ENCODE measurements at regions of chr16 and their contacts with region 1.

Region 1: GRCh38 chr16:83826146-83826913 is 18.6 kb downstream of the HSBP1 start:
- DNase-seq: peak; percentile 70 to 89 (median 82)
- ATAC-seq: peak; percentile 85 to 94 (median 92)
- H3K4me3 ChIP-seq: no peak overlapping the region
- H3K27ac ChIP-seq: no peak overlapping the region
- H3K4me1 ChIP-seq: peaks cover 0 to 5% (median 0%) of the 10 kb centered on the region in 12 donors
- H3K27me3 ChIP-seq: no peaks in the 10 kb centered on the region
- CTCF ChIP-seq: peak; percentile 92 to 96 (median 95)
- POLR2A ChIP-seq: no peak

Region 2: DNA sequence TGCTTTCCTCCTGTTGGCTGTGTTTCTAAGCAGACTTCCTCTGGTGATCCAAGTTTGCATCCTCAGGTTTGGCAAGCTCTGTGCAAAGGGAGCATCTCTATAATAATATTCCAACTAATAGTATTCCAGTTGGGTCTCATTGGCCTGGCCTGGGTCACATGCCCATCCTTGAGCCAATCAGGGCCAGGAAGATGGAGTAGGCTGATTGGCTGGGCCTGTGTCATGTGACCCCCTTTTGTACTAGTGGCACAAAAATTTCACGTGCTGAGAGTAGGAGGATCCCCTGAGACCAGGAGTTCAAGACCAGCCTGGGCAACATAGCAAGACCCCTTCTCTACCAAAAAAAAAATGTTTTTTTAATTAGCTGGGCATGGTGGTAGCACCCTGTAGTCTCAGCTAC is 37.4 kb after region 1 on chr16:
- intact Hi-C with region 1: loop called in 1 of 10 experiments (anchors 5 kb)
- DNase-seq: no peak
- ATAC-seq: no peak
- H3K4me3 ChIP-seq: no peak overlapping the region
- H3K27ac ChIP-seq: no peak overlapping the region
- H3K4me1 ChIP-seq: no peaks in the 10 kb centered on the region
- H3K27me3 ChIP-seq: peaks cover 0 to 2% (median 0%) of the 10 kb centered on the region in 9 donors
- CTCF ChIP-seq: no peak
- POLR2A ChIP-seq: no peak

Region 3: GRCh38 chr16:83887081-83887480 is 60.8 kb after region 1 on chr16:
- intact Hi-C with region 1: loop called in 1 of 10 experiments (anchors 5 kb)
- DNase-seq: no peak
- ATAC-seq: no peak
- H3K4me3 ChIP-seq: no peak overlapping the region
- H3K27ac ChIP-seq: no peak overlapping the region
- H3K4me1 ChIP-seq: peaks cover 0 to 5% (median 2%) of the 10 kb centered on the region in 12 donors
- H3K27me3 ChIP-seq: peaks cover 0 to 2% (median 0%) of the 10 kb centered on the region in 9 donors
- CTCF ChIP-seq: no peak
- POLR2A ChIP-seq: no peak

Region 4: GRCh38 chr16:83898463-83899271 is 72.3 kb after region 1 on chr16 and contains the start of gene MLYCD:
- intact Hi-C with region 1: no loop called
- DNase-seq: peak; percentile 89 to 93 (median 92)
- ATAC-seq: peak; percentile 86 to 91 (median 90)
- H3K4me3 ChIP-seq: peak within 1 kb of the TSS; percentile 65 to 98 (median 90)
- H3K27ac ChIP-seq: peak within 1 kb of the TSS; percentile 88 to 99 (median 98)
- H3K4me1 ChIP-seq: peaks cover 0 to 48% (median 30%) of the 10 kb centered on the region in 12 donors
- H3K27me3 ChIP-seq: no peaks in the 10 kb centered on the region
- CTCF ChIP-seq: peak in 1 of 12 donors; percentile 6
- POLR2A ChIP-seq: peak; percentile 31 to 51
- total RNA-seq, gene MLYCD: 22.5 to 65.3 (median 40.2) TPM

Region 5: DNA sequence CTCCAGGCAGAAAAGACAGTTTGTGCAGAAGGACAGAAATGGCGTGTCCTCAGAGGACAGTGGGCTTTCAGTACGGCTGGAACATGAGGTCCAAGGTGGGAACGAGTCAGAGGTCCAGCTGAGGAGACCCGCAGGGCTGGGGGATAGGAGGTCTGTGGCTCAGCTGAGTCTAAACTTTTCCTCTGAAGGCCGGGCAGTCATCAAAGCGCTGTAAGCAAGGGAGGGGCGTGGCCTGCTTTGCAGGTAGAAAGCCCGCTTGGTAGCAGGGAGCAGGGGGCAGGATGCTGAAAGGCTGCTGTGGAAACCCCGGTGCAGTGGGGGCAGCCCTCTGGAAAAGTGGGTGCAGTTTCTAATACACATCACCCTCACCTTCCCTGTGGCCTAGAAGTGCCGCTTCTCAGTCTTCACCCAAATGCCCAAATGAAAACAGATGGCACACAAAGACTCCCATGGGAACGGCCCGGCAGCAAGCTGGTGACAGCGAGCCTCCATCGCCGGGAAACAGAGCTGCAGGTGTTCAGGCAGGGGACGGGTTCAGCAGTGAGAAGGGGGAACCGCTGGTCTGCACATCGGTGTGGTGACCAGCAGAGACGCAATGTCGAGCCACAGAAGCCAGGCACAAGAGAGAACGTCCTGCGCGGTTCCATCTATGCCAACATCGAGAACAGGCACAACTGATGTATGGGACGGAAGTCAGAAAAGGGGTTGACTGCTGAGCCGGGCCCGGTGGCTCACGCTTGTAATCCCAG is 114.5 kb after region 1 on chr16:
- intact Hi-C with region 1: loop called in 1 of 10 experiments (anchors 5 kb)
- DNase-seq: no peak
- ATAC-seq: no peak
- H3K4me3 ChIP-seq: no peak overlapping the region
- H3K27ac ChIP-seq: no peak overlapping the region
- H3K4me1 ChIP-seq: peaks cover 0 to 19% (median 5%) of the 10 kb centered on the region in 12 donors
- H3K27me3 ChIP-seq: no peaks in the 10 kb centered on the region
- CTCF ChIP-seq: no peak
- POLR2A ChIP-seq: no peak

Region 6: DNA sequence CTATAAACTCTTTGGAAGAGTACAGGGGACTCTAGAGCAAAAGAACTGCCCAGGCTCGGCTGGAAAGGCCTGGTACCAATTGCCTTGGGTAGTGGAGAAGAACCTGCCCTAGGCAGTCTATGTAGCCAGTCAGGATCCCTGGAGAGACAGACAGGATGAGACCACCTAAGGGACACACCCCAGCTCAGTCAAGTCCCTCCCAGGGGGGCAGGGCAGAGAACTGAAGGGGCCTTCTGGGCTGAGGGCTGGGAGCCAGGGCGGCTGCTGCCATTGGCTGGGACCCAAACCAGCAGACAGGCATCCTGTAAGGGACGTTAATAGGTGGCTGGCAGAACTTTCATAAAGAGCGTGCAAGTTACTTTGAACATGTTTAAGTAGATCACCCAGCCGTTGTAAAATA is 229.0 kb after region 1 on chr16:
- intact Hi-C with region 1: loop called in 8 of 10 experiments (anchors 5 to 10 kb)
- DNase-seq: peak in 4 of 5 donors; percentile 53 to 77 (median 66)
- ATAC-seq: peak; percentile 62 to 82 (median 68)
- H3K4me3 ChIP-seq: no peak overlapping the region
- H3K27ac ChIP-seq: peak overlapping the region in 10 of 12 donors; percentile 2 to 88 (median 51)
- H3K4me1 ChIP-seq: peaks cover 0 to 57% (median 28%) of the 10 kb centered on the region in 12 donors
- H3K27me3 ChIP-seq: no peaks in the 10 kb centered on the region
- CTCF ChIP-seq: no peak
- POLR2A ChIP-seq: no peak

Region 7: GRCh38 chr16:84186685-84187437 is 360.5 kb after region 1 on chr16 and contains the start of gene TAF1C:
- intact Hi-C with region 1: loop called in 2 of 10 experiments (anchors 10 kb)
- DNase-seq: peak; percentile 90 to 95 (median 92)
- ATAC-seq: peak; percentile 82 to 95 (median 94)
- H3K4me3 ChIP-seq: peak within 1 kb of the TSS; percentile 62 to 100 (median 87)
- H3K27ac ChIP-seq: peak within 1 kb of the TSS; percentile 56 to 90 (median 82)
- H3K4me1 ChIP-seq: peaks cover 0 to 45% (median 16%) of the 10 kb centered on the region in 12 donors
- H3K27me3 ChIP-seq: no peaks in the 10 kb centered on the region
- CTCF ChIP-seq: peak in 11 of 12 donors; percentile 92 to 99 (median 98)
- POLR2A ChIP-seq: peak in 1 of 2 donors; percentile 46
- total RNA-seq, gene TAF1C: 16.3 to 24.3 (median 21.8) TPM